CD4-positive, alpha-beta memory T cell (primary cell): ENCODE measurements at regions of chr19 and their contacts with region 1.

Region 1: DNA sequence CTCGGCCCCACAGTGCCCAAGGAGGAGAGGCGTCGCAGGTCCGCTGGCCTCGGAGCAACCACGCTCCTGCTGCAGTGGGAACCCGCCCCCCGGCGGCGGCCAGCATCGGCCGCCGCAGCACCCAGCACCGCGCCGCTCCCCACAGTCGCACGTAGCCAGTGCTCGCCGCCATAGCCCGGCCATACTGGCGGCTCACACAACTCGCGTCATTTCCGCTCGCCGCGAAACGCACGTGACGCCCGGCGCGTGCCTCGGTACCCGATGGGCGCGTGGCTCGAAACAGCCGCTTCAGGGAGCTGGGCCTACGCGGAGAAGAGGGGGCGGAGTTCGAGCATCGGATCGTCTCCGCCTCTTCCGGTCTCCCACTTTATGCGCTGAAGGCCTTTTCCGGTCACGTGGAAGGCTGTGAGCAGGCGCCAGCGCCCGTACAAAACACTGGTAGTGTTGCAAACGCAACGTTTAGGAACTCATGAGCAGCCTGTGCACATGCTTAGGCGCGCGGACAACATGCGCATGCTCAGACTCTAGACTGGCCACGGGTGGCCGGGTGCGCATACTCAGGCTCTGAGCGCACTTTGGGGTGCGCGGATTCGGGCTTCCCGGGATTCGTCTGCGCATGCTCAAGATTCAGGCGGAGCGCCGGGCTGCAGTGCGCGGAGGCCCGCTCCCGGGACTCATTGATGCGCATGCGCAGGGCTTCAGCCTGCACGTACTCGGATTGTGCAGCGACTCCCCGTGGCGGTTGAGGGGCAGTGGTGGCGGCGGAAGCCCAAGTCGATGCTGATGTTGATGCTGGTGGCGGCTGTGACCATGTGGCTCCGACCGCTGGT is at the starts of genes CATSPERD and LONP1:
- DNase-seq: peak; percentile 98 to 99 (median 99)
- H3K4me3 ChIP-seq: peak within 1 kb of the TSS; percentile 87 to 92
- H3K4me3 Mint-ChIP-seq: peak within 1 kb of the TSS; percentile 90 to 97 (median 90)
- H3K27ac ChIP-seq: peak within 1 kb of the TSS; percentile 89
- H3K27ac Mint-ChIP-seq: peak within 1 kb of the TSS; percentile 94 to 99 (median 97)
- H3K4me1 ChIP-seq: peaks cover 23% of the 10 kb centered on the region
- H3K4me1 Mint-ChIP-seq: peaks cover 20 to 37% (median 27%) of the 10 kb centered on the region in 4 donors
- H3K27me3 ChIP-seq: no peaks in the 10 kb centered on the region
- H3K27me3 Mint-ChIP-seq: peaks cover 0 to 6% of the 10 kb centered on the region in 2 donors
- total RNA-seq, gene CATSPERD: not detected
- total RNA-seq, gene LONP1: 59.6 to 64.7 TPM

Region 2: GRCh38 chr19:5622463-5623396 is 97.4 kb before region 1 on chr19 and contains the starts of genes SAFB and SAFB2:
- CTCF ChIA-PET with region 1: interaction called, 3 read pairs
- POLR2A ChIA-PET with region 1: interaction called, 29 read pairs
- intact Hi-C with region 1: loop called (anchors 1 kb)
- DNase-seq: peak; percentile 99 to 100 (median 100)
- H3K4me3 ChIP-seq: peak within 1 kb of the TSS; percentile 80 to 82
- H3K4me3 Mint-ChIP-seq: peak within 1 kb of the TSS; percentile 99 to 100 (median 100)
- H3K27ac ChIP-seq: peak within 1 kb of the TSS; percentile 97
- H3K27ac Mint-ChIP-seq: peak within 1 kb of the TSS; percentile 97 to 100 (median 100)
- H3K4me1 ChIP-seq: peaks cover 73% of the 10 kb centered on the region
- H3K4me1 Mint-ChIP-seq: peaks cover 43 to 88% (median 69%) of the 10 kb centered on the region in 4 donors
- H3K27me3 ChIP-seq: no peaks in the 10 kb centered on the region
- H3K27me3 Mint-ChIP-seq: no peaks in the 10 kb centered on the region
- total RNA-seq, gene SAFB: 202 to 211 TPM
- total RNA-seq, gene SAFB2: 257 to 263 TPM

Region 3: DNA sequence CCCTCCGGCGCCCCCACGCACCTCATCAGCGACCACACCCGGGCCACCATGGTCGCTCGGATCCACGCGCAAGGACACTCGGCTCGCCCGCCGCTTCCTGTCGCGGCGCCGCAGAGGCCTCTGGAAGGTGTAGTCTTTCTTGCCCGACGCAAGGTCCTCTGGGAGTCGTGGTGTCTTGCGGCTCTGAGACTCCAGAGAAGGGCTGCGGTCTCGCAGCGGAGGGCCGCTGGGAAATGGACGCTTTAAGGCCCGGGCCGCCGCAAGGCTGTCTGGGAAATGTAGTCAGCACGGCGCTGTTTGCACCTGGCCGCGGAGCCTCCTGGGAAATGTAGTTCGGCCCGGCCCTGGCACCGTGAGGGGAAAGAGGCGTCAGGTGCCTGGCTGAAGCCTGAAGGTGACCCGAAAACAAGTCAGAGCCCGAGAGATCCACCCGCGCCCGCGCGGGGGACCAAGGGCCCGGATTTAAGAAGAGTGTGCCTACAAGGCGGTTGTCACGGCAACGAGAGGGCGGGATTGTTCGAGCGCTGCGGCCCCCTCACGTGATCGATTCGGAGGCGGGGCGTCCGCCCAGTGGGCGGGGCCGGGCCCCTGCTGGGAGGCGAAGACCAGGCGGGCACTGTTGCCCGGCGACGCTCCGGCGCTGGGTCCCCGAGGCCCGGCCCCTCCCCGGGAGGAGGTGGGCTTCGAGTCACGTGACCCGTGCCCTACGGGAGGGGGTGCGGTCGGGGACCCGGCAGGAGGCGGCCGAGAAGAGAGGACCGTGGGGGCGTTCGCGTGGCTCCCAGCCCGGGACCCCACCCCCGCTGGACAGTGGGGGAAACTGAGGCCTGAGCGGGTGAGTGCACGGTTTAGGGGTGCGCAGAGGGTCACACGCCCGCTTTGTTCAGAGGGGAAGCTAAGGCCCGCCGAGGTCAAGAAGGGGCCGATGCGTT is 39.5 kb before region 1 on chr19 and contains the starts of genes HSD11B1L and MICOS13:
- CTCF ChIA-PET with region 1: interaction called, 18 read pairs
- POLR2A ChIA-PET with region 1: interaction called, 28 read pairs
- intact Hi-C with region 1: loop called (anchors 1 kb)
- DNase-seq: peak; percentile 99 to 100 (median 99)
- H3K4me3 ChIP-seq: peak within 1 kb of the TSS; percentile 62 to 96
- H3K4me3 Mint-ChIP-seq: peak within 1 kb of the TSS; percentile 87 to 98 (median 93)
- H3K27ac ChIP-seq: peak within 1 kb of the TSS; percentile 87
- H3K27ac Mint-ChIP-seq: peak within 1 kb of the TSS; percentile 94 to 100 (median 99)
- H3K4me1 ChIP-seq: peaks cover 21% of the 10 kb centered on the region
- H3K4me1 Mint-ChIP-seq: peaks cover 18 to 41% (median 26%) of the 10 kb centered on the region in 4 donors
- H3K27me3 ChIP-seq: no peaks in the 10 kb centered on the region
- H3K27me3 Mint-ChIP-seq: no peaks in the 10 kb centered on the region
- total RNA-seq, gene HSD11B1L: 3.5 to 4.8 TPM
- total RNA-seq, gene MICOS13: 40.5 to 41.1 TPM

Region 4: GRCh38 chr19:5690125-5690954 is 29.8 kb before region 1 on chr19 and contains the start of gene RPL36:
- CTCF ChIA-PET with region 1: interaction called, 36 read pairs
- POLR2A ChIA-PET with region 1: interaction called, 79 read pairs
- intact Hi-C with region 1: loop called (anchors 1 kb)
- DNase-seq: peak; percentile 97 to 99 (median 98)
- H3K4me3 ChIP-seq: peak within 1 kb of the TSS; percentile 84 to 86
- H3K4me3 Mint-ChIP-seq: peak within 1 kb of the TSS; percentile 92 to 97 (median 94)
- H3K27ac ChIP-seq: peak within 1 kb of the TSS; percentile 83
- H3K27ac Mint-ChIP-seq: peak within 1 kb of the TSS; percentile 94 to 100 (median 97)
- H3K4me1 ChIP-seq: peaks cover 36% of the 10 kb centered on the region
- H3K4me1 Mint-ChIP-seq: peaks cover 19 to 46% (median 31%) of the 10 kb centered on the region in 4 donors
- H3K27me3 ChIP-seq: no peaks in the 10 kb centered on the region
- H3K27me3 Mint-ChIP-seq: no peaks in the 10 kb centered on the region
- total RNA-seq, gene RPL36: 1,675 to 1,762 TPM

Region 5: DNA sequence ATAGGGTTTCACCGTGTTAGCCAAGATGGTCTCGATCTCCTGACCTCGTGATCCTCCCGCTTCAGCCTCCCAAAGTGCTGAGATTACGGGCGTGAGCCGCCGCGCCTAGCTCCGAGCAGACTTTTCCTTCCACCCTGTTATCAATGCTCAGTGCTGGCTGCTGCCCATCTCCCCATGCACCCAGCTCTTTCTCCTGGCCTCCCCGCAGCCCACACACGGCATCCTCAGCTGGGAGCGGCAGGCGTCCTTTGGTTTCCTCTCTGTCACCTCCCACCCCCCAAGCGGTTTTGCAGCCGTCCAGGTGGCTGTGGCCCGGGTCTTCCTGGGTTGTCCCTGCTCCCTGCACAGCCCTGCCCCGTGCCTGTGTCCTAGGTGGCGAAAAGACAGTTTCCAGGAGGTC is 52.2 kb after region 1 on chr19:
- CTCF ChIA-PET with region 1: no interaction called
- POLR2A ChIA-PET with region 1: no interaction called
- intact Hi-C with region 1: no loop called
- DNase-seq: no peak
- H3K4me3 ChIP-seq: no peak overlapping the region
- H3K4me3 Mint-ChIP-seq: no peak overlapping the region
- H3K27ac ChIP-seq: no peak overlapping the region
- H3K27ac Mint-ChIP-seq: no peak overlapping the region
- H3K4me1 ChIP-seq: no peaks in the 10 kb centered on the region
- H3K4me1 Mint-ChIP-seq: no peaks in the 10 kb centered on the region
- H3K27me3 ChIP-seq: no peaks in the 10 kb centered on the region
- H3K27me3 Mint-ChIP-seq: no peaks in the 10 kb centered on the region

Region 6: GRCh38 chr19:5891938-5892771 is 172.0 kb after region 1 on chr19:
- CTCF ChIA-PET with region 1: no interaction called
- POLR2A ChIA-PET with region 1: no interaction called
- intact Hi-C with region 1: no loop called
- DNase-seq: no peak
- H3K4me3 ChIP-seq: no peak overlapping the region
- H3K4me3 Mint-ChIP-seq: no peak overlapping the region
- H3K27ac ChIP-seq: no peak overlapping the region
- H3K27ac Mint-ChIP-seq: no peak overlapping the region
- H3K4me1 ChIP-seq: no peaks in the 10 kb centered on the region
- H3K4me1 Mint-ChIP-seq: peaks cover 0 to 3% (median under 1%) of the 10 kb centered on the region in 4 donors
- H3K27me3 ChIP-seq: no peaks in the 10 kb centered on the region
- H3K27me3 Mint-ChIP-seq: peaks cover 0 to 5% of the 10 kb centered on the region in 2 donors